HepG2 (cell line): ENCODE measurements at regions of chr6 and their contacts with region 1.

Region 1: DNA sequence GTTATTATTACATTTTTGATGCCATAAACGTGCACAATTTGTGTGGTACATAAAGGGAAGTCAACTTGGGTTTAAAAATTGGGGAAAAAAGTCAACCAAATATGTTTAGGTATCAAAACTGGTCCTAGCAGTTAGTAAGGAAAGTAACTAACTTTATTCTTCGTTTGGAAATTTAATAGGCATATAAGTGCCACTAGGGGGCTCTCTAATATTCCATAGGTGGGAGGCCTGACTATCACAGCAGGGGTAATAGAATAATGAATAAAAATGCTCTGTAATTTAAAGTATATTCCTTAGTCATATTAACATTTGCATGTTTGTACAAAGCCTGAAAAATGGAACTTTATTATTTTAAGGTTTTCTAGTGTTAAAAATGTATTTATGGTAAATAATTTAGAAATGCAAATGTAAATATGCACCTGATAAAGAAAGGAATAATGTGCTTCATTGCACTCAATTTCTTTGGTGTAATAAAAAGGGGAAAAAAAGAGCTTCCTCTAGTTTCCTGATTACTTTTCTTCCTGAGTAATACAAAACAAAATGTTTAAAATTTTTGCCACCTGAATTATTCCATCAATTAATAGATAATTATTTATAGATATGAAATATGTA is 125.7 kb upstream of the HDAC2 start:
- DNase-seq: peak; percentile 46
- ATAC-seq: no peak
- H3K4me3 ChIP-seq: no peak overlapping the region
- H3K27ac ChIP-seq: no peak overlapping the region
- H3K4me1 ChIP-seq: peaks cover 12% of the 10 kb centered on the region
- H3K27me3 ChIP-seq: no peaks in the 10 kb centered on the region
- CTCF ChIP-seq: peak; percentile 63
- EP300 ChIP-seq: no peak
- POLR2A ChIP-seq: no peak
- RAD21 ChIP-seq: peak; percentile 62; the same call in 1 of the 2 replicates

Region 2: DNA sequence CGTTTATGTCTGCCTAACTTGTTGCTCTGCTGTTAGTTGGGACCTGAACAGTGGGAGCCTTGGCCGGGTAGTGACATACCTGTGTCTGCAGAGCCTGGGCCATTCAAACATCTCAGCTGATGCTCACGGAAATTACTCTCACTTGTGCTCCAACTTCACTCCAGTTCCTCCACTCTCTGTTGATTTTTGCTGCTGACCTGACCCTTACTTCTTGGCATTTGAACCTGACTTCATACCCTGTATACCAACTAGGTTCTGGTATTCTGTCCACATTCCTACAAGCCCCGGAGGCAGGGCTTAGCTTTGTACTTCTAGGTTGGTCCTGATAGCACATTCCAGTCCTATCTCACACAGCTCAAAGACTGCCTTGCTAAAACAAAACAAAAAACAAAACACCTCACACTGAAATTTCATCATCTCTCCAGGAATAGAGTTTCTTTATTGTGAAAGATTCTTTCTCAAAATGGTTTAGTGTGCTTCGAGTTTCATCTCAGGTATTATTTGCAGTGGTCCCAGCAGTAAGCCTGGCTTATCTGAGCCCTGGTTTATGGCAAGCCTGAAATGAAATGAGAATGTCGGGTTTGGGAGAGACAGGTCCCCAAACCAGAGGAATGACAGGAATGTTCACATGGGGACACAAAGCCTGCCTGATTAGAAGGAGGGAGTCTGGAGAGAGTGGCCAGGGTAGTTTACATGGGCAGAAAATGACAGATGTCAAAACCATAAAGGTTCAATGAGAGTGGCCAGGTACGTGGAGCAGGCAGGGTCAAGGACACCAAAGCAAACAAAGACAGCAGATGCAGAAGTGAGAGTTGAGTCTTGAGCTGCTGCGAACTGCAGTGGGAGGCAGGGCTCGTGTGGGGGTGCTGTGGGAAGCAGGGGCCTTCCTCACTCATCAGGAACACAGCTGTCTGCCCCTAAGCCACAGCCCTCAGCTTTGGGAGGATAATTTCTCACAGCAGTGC is 48.5 kb after region 1 on chr6:
- CTCF ChIA-PET with region 1: no interaction called
- POLR2A ChIA-PET with region 1: no interaction called
- in situ Hi-C with region 1: no loop called
- intact Hi-C with region 1: no loop called
- DNase-seq: peak; percentile 98
- ATAC-seq: peak; percentile 99
- H3K4me3 ChIP-seq: peak overlapping the region; percentile 30 to 53 (median 44); a peak in 5 of 6 replicates
- H3K27ac ChIP-seq: peak overlapping the region; percentile 82
- H3K4me1 ChIP-seq: peaks cover 54% of the 10 kb centered on the region
- H3K27me3 ChIP-seq: no peaks in the 10 kb centered on the region
- CTCF ChIP-seq: peak; percentile 48
- EP300 ChIP-seq: peak; percentile 38 to 88; a peak in 3 of 4 replicates
- POLR2A ChIP-seq: no peak; a peak in 1 of 4 replicates
- RAD21 ChIP-seq: no peak

Region 3: GRCh38 chr6:114160881-114161280 is 64.2 kb after region 1 on chr6:
- CTCF ChIA-PET with region 1: no interaction called
- POLR2A ChIA-PET with region 1: no interaction called
- in situ Hi-C with region 1: no loop called
- intact Hi-C with region 1: no loop called
- DNase-seq: no peak
- ATAC-seq: no peak
- H3K4me3 ChIP-seq: no peak overlapping the region
- H3K27ac ChIP-seq: no peak overlapping the region
- H3K4me1 ChIP-seq: peaks cover 73% of the 10 kb centered on the region
- H3K27me3 ChIP-seq: no peaks in the 10 kb centered on the region
- CTCF ChIP-seq: no peak
- EP300 ChIP-seq: no peak
- POLR2A ChIP-seq: no peak
- RAD21 ChIP-seq: no peak

Region 4: GRCh38 chr6:114304304-114304887 is 207.7 kb after region 1 on chr6:
- CTCF ChIA-PET with region 1: interaction called, 17 read pairs
- POLR2A ChIA-PET with region 1: no interaction called
- in situ Hi-C with region 1: no loop called
- intact Hi-C with region 1: loop called (anchors 1 kb)
- DNase-seq: peak; percentile 19
- ATAC-seq: no peak
- H3K4me3 ChIP-seq: no peak overlapping the region
- H3K27ac ChIP-seq: no peak overlapping the region
- H3K4me1 ChIP-seq: peaks cover 36% of the 10 kb centered on the region
- H3K27me3 ChIP-seq: no peaks in the 10 kb centered on the region
- CTCF ChIP-seq: peak; percentile 34; the same call in 1 of the 2 replicates
- EP300 ChIP-seq: no peak
- POLR2A ChIP-seq: no peak
- RAD21 ChIP-seq: no peak